ENCODE measurements at regions of chr1 and their contacts with region 1.

Region 1: GRCh38 chr1:110766025-110766647 is 91.4 kb upstream of the KCNA3 start:
- DNase-seq: peak; percentile 58
- H3K4me3 Mint-ChIP-seq: peak overlapping the region; percentile 40
- H3K27ac Mint-ChIP-seq: no peak overlapping the region
- H3K4me1 Mint-ChIP-seq: peaks cover 3% of the 10 kb centered on the region
- H3K27me3 Mint-ChIP-seq: peaks cover 12% of the 10 kb centered on the region

Region 2: DNA sequence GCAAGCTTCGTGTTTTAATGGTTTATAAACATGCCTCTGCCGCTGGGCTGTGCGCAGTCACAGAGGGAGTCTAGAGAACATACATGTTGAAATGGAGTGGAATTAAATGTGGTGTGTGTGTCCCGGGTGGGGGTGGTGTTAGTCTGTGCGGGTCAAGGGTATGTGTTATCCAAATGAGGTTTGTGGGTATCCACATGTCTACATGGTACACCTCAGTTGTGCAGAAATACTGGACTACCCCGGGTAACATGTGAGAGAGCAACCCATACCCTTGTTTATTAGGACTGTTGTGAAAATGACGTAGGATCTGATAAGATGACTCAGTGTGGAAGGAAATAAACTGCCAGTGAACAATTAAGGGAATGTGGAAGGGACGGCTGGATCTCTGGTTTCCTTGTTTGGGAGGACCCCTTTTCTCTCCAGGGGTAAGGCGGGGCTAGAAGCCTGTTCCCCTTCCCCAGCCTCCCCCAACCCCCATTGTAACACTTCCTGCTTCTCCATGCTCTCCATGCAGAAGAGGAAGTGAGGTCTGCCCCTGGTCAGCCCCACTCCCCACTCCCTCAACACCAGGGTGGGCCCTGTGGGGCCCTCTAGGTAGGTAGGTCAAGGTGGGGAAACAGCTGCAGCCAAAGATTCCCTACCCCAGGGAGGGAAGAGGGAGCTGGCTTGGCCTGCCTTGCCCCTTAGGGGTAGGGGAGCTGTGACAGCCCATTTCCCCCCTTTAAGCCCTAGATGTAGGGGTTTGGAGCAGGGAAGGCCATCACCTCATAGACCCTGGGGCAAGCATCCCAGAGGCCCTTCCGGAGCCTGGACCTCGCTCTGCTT is 1003.1 kb before region 1 on chr1:
- CTCF ChIA-PET with region 1: no interaction called
- POLR2A ChIA-PET with region 1: no interaction called
- intact Hi-C with region 1: no loop called
- DNase-seq: no peak
- H3K4me3 Mint-ChIP-seq: no peak overlapping the region
- H3K27ac Mint-ChIP-seq: no peak overlapping the region
- H3K4me1 Mint-ChIP-seq: no peaks in the 10 kb centered on the region
- H3K27me3 Mint-ChIP-seq: no peaks in the 10 kb centered on the region

Region 3: GRCh38 chr1:110605901-110606656 is 160.1 kb before region 1 on chr1 and contains the start of gene KCNA2:
- CTCF ChIA-PET with region 1: interaction called, 11 read pairs
- POLR2A ChIA-PET with region 1: no interaction called
- intact Hi-C with region 1: no loop called
- DNase-seq: no peak
- H3K4me3 Mint-ChIP-seq: peak within 1 kb of the TSS; percentile 74
- H3K27ac Mint-ChIP-seq: no peak within 1 kb of the TSS
- H3K4me1 Mint-ChIP-seq: peaks cover 17% of the 10 kb centered on the region
- H3K27me3 Mint-ChIP-seq: peaks cover 44% of the 10 kb centered on the region
- total RNA-seq, gene KCNA2: 0.24 to 0.36 TPM

Region 4: GRCh38 chr1:110639724-110640386 is 126.3 kb before region 1 on chr1:
- CTCF ChIA-PET with region 1: interaction called, 21 read pairs
- POLR2A ChIA-PET with region 1: no interaction called
- intact Hi-C with region 1: no loop called
- DNase-seq: no peak
- H3K4me3 Mint-ChIP-seq: no peak overlapping the region
- H3K27ac Mint-ChIP-seq: peak overlapping the region; percentile 15
- H3K4me1 Mint-ChIP-seq: peaks cover 87% of the 10 kb centered on the region
- H3K27me3 Mint-ChIP-seq: no peaks in the 10 kb centered on the region

Region 5: DNA sequence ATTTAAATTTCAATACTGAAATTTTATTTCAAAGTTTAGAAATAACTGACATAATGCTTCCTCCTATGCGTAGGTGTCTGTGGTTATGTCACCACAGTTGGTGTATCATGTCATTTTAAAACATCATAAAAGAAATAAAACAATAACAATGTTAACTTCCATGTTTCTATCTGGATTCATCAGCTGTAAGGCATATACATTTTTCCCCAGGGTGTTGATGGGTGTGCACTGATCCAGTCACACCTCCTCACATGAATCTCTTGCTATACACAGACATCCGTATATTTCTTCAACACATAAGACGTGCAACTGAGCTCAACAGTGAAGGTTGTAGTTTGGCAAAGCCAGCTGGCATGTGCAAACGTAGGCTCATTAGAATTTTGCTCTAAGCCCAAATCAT is 97.6 kb before region 1 on chr1:
- CTCF ChIA-PET with region 1: interaction called, 14 read pairs
- POLR2A ChIA-PET with region 1: no interaction called
- intact Hi-C with region 1: loop called (anchors 1 kb)
- DNase-seq: peak; percentile 14
- H3K4me3 Mint-ChIP-seq: peak overlapping the region; percentile 66
- H3K27ac Mint-ChIP-seq: peak overlapping the region; percentile 88
- H3K4me1 Mint-ChIP-seq: peaks cover 25% of the 10 kb centered on the region
- H3K27me3 Mint-ChIP-seq: no peaks in the 10 kb centered on the region

Region 6: GRCh38 chr1:110708974-110709440 is 57.1 kb before region 1 on chr1:
- CTCF ChIA-PET with region 1: interaction called, 23 read pairs
- POLR2A ChIA-PET with region 1: no interaction called
- intact Hi-C with region 1: no loop called
- DNase-seq: no peak
- H3K4me3 Mint-ChIP-seq: no peak overlapping the region
- H3K27ac Mint-ChIP-seq: no peak overlapping the region
- H3K4me1 Mint-ChIP-seq: peaks cover 17% of the 10 kb centered on the region
- H3K27me3 Mint-ChIP-seq: peaks cover 3% of the 10 kb centered on the region